Aorta (tissue), 5 donors: ENCODE measurements at regions of chr1 and their contacts with region 1.

Region 1: GRCh38 chr1:9573723-9574122 is 15.0 kb upstream of the TMEM201 start:
- DNase-seq: no peak
- ATAC-seq: no peak
- H3K4me3 ChIP-seq: no peak overlapping the region
- H3K27ac ChIP-seq: no peak overlapping the region
- H3K4me1 ChIP-seq: no peaks in the 10 kb centered on the region
- H3K27me3 ChIP-seq: no peaks in the 10 kb centered on the region

Region 2: GRCh38 chr1:9466780-9467758 is 106.7 kb before region 1 on chr1:
- intact Hi-C with region 1: no loop called
- DNase-seq: peak in 1 of 2 donors; percentile 81
- ATAC-seq: peak; percentile 70
- H3K4me3 ChIP-seq: no peak overlapping the region
- H3K27ac ChIP-seq: no peak overlapping the region
- H3K4me1 ChIP-seq: no peaks in the 10 kb centered on the region
- H3K27me3 ChIP-seq: no peaks in the 10 kb centered on the region

Region 3: GRCh38 chr1:9494929-9495758 is 78.6 kb before region 1 on chr1:
- intact Hi-C with region 1: loop called (anchors 1 kb)
- DNase-seq: peak; percentile 58 to 89
- ATAC-seq: peak; percentile 79
- H3K4me3 ChIP-seq: no peak overlapping the region
- H3K27ac ChIP-seq: no peak overlapping the region
- H3K4me1 ChIP-seq: no peaks in the 10 kb centered on the region
- H3K27me3 ChIP-seq: no peaks in the 10 kb centered on the region